ENCODE measurements at regions of chr6 and their contacts with region 1.

Region 1: GRCh38 chr6:37705239-37706051 is 7.8 kb upstream of the MDGA1 start:
- DNase-seq: peak; percentile 71 to 88 (median 82)
- H3K4me3 ChIP-seq: peak overlapping the region; percentile 30 to 75 (median 57)
- H3K27ac ChIP-seq: peak overlapping the region; percentile 25 to 93 (median 83)
- H3K27me3 ChIP-seq: no peaks in the 10 kb centered on the region
- CTCF ChIP-seq: peak; percentile 50 to 91 (median 76)

Region 2: GRCh38 chr6:37860226-37860839 is 154.9 kb after region 1 on chr6:
- intact Hi-C with region 1: loop called in 1 of 2 experiments (anchors 5 kb)
- DNase-seq: peak in 3 of 10 donors; percentile 11 to 39 (median 29)
- H3K4me3 ChIP-seq: no peak overlapping the region
- H3K27ac ChIP-seq: no peak overlapping the region
- H3K27me3 ChIP-seq: no peaks in the 10 kb centered on the region
- CTCF ChIP-seq: peak; percentile 46 to 78 (median 66)

Region 3: GRCh38 chr6:38012573-38012972 is 307.1 kb after region 1 on chr6:
- intact Hi-C with region 1: loop called in 1 of 2 experiments (anchors 10 kb)
- DNase-seq: peak in 4 of 10 donors; percentile 19 to 47 (median 36)
- H3K4me3 ChIP-seq: no peak overlapping the region
- H3K27ac ChIP-seq: no peak overlapping the region
- H3K27me3 ChIP-seq: no peaks in the 10 kb centered on the region
- CTCF ChIP-seq: peak; percentile 32 to 80 (median 64)

Region 4: GRCh38 chr6:38570750-38571149 is 865.3 kb after region 1 on chr6:
- intact Hi-C with region 1: loop called in 1 of 2 experiments (anchors 5 kb)
- DNase-seq: no peak
- H3K4me3 ChIP-seq: no peak overlapping the region
- H3K27ac ChIP-seq: no peak overlapping the region
- H3K27me3 ChIP-seq: no peaks in the 10 kb centered on the region
- CTCF ChIP-seq: peak; percentile 16 to 79 (median 62)